Posterior cingulate gyrus (tissue), 11 donors: ENCODE measurements at regions of chr21 and their contacts with region 1.

Region 1: DNA sequence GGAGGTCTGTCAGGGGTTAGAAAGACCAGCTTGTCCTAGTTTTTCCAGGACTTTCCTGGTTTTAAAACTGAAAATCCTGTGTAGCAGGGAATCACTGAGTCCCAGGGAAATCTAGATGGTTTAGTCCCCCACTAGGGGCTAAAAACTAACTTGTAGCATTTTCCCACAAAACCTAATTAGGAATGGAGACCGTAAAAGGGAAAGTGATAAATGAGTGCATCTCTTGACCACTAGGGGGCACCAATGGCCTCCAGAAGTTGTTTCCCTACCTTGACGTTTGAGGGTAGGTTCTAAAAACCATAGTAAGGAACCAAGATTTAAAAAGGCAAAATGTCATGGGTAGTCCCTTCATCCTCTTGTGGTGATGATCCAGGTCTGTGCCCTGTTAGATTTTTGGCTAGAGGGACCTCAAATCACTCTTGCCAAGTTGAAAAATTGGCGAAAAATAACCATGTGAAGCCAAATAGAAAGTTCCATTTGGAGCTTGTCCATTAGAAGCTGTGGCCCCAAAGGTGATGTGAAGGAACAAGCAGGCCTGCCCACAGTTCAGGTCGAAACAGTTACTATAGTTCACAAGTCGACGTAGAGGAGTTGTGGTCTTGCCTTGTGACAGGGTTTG is 24.5 kb downstream of the CLIC6 start:
- DNase-seq: peak in 2 of 10 donors; percentile 19 to 21

Region 2: DNA sequence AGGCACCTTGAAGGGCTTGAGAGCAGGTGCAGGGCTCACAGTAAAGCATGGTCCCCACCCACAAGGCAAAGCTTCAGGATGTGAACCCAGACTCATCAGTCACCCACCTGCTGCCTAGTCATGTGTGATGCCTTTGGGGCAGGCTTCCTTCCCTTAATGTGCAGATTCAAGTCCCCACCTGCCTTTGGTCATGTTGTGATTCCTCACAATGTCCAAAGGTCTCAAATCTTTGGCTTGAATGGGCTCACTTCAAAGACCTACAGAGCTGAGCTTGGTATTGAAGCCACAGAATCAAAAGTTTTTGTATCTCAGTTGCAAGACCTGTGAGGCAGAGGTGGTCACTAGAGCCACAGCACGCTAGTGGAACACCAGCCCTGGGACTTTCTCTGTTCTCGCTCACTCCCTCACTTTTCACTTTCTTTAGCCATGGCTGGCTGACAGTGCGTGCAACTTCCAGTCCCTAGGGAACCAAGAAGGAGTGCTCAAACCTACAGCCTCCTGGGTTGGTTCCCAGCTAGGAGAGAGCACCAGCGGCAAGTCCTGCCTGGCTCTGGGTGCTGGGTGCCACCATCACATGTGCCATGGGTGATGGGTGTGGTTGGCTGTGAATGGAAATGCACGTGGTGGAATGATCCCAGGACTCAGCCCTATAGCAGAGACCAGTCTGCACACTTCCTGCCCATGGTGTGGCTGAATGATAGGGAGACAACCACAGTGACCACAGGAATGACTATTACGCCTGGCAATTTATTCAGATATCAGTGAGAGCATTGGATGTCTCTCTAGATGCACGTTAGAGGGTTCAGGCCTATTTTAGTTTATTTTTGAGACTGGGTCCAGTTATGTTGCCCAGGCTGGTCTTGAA is 50.9 kb before region 1 on chr21:
- intact Hi-C with region 1: no loop called
- DNase-seq: no peak

Region 3: GRCh38 chr21:35840197-35840799 is 1147.0 kb after region 1 on chr21:
- intact Hi-C with region 1: loop called (anchors 10 kb)
- DNase-seq: peak in 5 of 10 donors; percentile 22 to 45 (median 41)

Region 4: DNA sequence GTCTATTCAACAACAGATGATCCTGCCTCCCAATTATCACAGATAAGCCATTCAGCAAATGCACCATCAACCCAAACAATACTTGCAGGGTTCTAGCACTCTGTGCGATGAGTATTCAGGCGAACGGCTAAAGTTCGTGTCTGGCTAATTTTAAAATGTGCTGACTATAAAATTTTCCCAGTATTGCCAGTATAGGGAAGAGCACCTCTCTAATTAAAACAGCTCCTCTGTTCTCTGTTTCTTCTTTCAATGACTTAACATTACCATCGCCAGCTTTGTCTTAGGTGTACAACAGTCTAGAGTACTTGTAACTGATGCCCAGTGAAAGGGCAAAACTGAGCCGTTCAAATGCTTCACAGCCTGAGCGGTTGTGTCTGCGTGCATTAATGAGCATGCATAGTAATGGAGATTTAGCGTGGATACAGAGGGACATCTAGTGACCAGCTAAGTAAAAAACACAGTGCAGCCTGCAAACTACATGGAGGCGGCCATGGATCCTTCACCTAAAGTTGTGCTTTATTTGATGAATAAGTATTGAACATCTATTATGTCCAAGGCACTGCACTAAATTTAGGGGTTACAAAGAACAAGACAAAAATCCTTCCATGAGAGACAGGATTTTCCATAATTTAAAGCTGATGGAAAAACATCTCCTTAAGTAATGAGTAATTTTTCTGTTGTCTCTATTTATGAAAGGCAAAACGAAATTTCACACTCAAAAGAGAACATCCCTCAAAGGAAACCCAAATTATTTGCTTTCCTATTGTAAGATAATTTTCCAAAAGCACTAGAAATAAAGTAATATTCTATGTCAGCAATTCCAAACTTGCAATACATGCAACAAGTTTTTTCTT is 1247.0 kb after region 1 on chr21:
- intact Hi-C with region 1: loop called (anchors 2 kb)
- DNase-seq: peak in 8 of 10 donors; percentile 17 to 88 (median 32)

Region 5: GRCh38 chr21:36028127-36029069 is 1335.1 kb after region 1 on chr21:
- intact Hi-C with region 1: loop called (anchors 10 kb)
- DNase-seq: peak; percentile 55 to 96 (median 80)